ENCODE measurements at regions of chr19 and their contacts with region 1.

Region 1: GRCh38 chr19:53867225-53868090 is at the start of gene MYADM:
- DNase-seq: peak; percentile 98 to 100
- H3K4me3 ChIP-seq: peak within 1 kb of the TSS; percentile 92
- H3K27ac ChIP-seq: peak within 1 kb of the TSS; percentile 99
- H3K4me1 ChIP-seq: peaks cover 28% of the 10 kb centered on the region
- H3K27me3 ChIP-seq: no peaks in the 10 kb centered on the region
- CTCF ChIP-seq: no peak
- total RNA-seq, gene MYADM: 230 and 238 TPM in 2 replicates

Region 2: GRCh38 chr19:53158119-53158656 is 709.3 kb before region 1 on chr19:
- CTCF ChIA-PET with region 1: no interaction called
- POLR2A ChIA-PET with region 1: interaction called, 18 read pairs
- intact Hi-C with region 1: no loop called
- DNase-seq: peak in 1 of 2 experiments; percentile 51
- H3K4me3 ChIP-seq: peak overlapping the region; percentile 93
- H3K27ac ChIP-seq: no peak overlapping the region
- H3K4me1 ChIP-seq: peaks cover 3% of the 10 kb centered on the region; the same call in 1 of the 2 replicates
- H3K27me3 ChIP-seq: no peaks in the 10 kb centered on the region
- CTCF ChIP-seq: no peak

Region 3: DNA sequence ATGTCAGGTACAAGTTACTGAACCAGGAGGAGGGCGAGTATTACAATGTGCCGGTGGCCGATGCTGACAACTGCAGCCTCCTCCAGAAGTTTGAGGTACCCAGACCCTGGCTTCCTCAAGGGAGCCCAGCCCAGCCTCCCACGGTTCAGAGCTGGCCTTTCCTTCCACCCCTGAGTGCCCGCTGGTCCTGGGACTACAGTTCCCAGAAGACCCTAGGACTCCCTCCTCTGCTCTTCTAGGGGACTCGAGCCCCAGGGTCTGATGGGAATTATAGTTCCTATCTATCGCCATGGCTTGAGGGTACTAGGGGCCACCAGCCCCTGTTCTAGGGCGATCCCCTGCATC is 25.5 kb after region 1 on chr19:
- CTCF ChIA-PET with region 1: no interaction called
- POLR2A ChIA-PET with region 1: interaction called, 10 read pairs
- intact Hi-C with region 1: no loop called
- DNase-seq: no peak
- H3K4me3 ChIP-seq: no peak overlapping the region
- H3K27ac ChIP-seq: no peak overlapping the region
- H3K4me1 ChIP-seq: peaks cover 23% of the 10 kb centered on the region
- H3K27me3 ChIP-seq: no peaks in the 10 kb centered on the region
- CTCF ChIP-seq: no peak

Region 4: GRCh38 chr19:53991224-53992113 is 124.0 kb after region 1 on chr19 and contains the start of gene CACNG6:
- CTCF ChIA-PET with region 1: interaction called, 17 read pairs
- POLR2A ChIA-PET with region 1: no interaction called
- intact Hi-C with region 1: no loop called
- DNase-seq: peak; percentile 72
- H3K4me3 ChIP-seq: peak within 1 kb of the TSS; percentile 94
- H3K27ac ChIP-seq: peak within 1 kb of the TSS; percentile 69
- H3K4me1 ChIP-seq: peaks cover 37% of the 10 kb centered on the region
- H3K27me3 ChIP-seq: no peaks in the 10 kb centered on the region
- CTCF ChIP-seq: no peak
- total RNA-seq, gene CACNG6: 11.5 and 18.7 TPM in 2 replicates

Region 5: GRCh38 chr19:54029930-54030490 is 162.6 kb after region 1 on chr19:
- CTCF ChIA-PET with region 1: interaction called, 11 read pairs
- POLR2A ChIA-PET with region 1: interaction called, 3 read pairs
- intact Hi-C with region 1: no loop called
- DNase-seq: peak; percentile 65 to 68
- H3K4me3 ChIP-seq: no peak overlapping the region
- H3K27ac ChIP-seq: no peak overlapping the region
- H3K4me1 ChIP-seq: peaks cover 15% of the 10 kb centered on the region
- H3K27me3 ChIP-seq: no peaks in the 10 kb centered on the region
- CTCF ChIP-seq: peak; percentile 87

Region 6: DNA sequence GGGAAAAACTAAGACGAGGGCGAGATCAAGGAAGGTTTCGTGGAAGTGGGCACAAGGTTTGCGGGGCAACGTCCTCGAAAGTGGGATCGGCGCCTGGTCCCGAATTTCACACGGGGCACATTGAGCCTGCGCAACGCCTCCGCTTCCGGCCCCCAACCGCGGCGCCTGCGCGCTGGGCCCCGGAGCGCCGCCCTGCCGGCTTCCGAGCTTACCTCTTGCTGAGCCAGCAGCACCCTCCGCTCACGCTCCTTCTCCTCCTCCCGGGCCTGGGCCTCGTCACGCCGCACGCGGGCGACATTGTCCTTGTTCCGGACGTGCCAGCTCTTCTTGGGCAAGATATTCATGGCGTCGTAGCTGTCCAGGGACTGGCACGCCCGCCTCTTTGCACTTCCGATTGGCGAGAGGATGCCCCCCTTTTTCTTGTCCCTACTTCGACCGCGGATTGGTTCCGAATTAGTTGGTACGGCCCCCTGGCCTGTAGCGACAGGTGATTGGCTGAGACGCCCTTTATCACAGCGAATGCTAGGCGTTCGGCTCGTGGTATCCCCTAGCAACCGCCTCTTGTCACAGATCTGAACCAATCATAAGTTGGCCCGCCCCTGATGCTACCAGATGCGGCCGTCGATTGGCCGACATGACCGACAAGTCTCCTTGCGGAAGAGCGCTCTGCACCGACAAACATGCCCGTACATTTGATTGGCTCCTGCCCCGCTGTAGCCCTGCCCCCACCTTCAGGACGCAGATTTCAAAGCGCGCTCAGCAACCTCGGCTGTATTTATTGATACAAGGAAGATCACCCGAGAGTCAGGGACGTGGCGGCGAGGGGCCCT is 292.1 kb after region 1 on chr19 and contains the start of gene LENG1:
- CTCF ChIA-PET with region 1: no interaction called
- POLR2A ChIA-PET with region 1: interaction called, 4 read pairs
- intact Hi-C with region 1: loop called (anchors 2 kb)
- DNase-seq: peak; percentile 100
- H3K4me3 ChIP-seq: peak within 1 kb of the TSS; percentile 82
- H3K27ac ChIP-seq: peak within 1 kb of the TSS; percentile 57
- H3K4me1 ChIP-seq: peaks cover 33% of the 10 kb centered on the region
- H3K27me3 ChIP-seq: no peaks in the 10 kb centered on the region
- CTCF ChIP-seq: peak; percentile 53; the same call in 1 of the 2 replicates
- total RNA-seq, gene LENG1: 5.0 and 6.7 TPM in 2 replicates

Region 7: GRCh38 chr19:54448774-54449700 is 581.6 kb after region 1 on chr19 and contains the start of gene LENG8:
- CTCF ChIA-PET with region 1: no interaction called
- POLR2A ChIA-PET with region 1: no interaction called
- intact Hi-C with region 1: loop called (anchors 2 kb)
- DNase-seq: peak; percentile 94 to 98
- H3K4me3 ChIP-seq: peak within 1 kb of the TSS; percentile 96
- H3K27ac ChIP-seq: peak within 1 kb of the TSS; percentile 65
- H3K4me1 ChIP-seq: peaks cover 25% of the 10 kb centered on the region
- H3K27me3 ChIP-seq: no peaks in the 10 kb centered on the region
- CTCF ChIP-seq: no peak
- total RNA-seq, gene LENG8: 274 and 279 TPM in 2 replicates